ENCODE measurements at regions of chrX and their contacts with region 1.

Region 1: DNA sequence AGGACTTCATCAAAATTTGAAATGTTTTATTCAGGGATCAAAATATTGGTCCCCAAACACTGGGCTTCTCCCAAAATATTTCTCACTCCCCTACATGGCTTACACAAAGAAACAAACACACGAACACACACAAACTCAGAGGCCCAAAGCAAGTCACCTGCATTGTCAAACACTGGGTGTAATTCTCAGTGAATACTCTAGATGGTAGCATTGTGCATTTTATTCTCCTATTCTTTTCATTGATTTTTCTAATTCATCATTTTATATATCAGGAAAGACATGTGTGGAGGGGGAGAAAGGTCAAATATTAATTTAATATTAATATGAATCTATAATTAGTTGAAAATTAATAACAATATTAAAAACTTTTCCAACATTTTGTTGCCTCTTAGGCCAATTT is 72.3 kb upstream of the TNMD start:
- DNase-seq: peak; percentile 1
- ATAC-seq: peak; percentile 62; the same call in 1 of the 2 replicates
- H3K4me3 ChIP-seq: no peak overlapping the region
- H3K27ac ChIP-seq: no peak overlapping the region
- H3K4me1 ChIP-seq: no peaks in the 10 kb centered on the region
- H3K27me3 ChIP-seq: peaks cover 2% of the 10 kb centered on the region; the same call in 1 of the 2 replicates
- CTCF ChIP-seq: peak; percentile 67; the same call in 1 of the 2 replicates

Region 2: DNA sequence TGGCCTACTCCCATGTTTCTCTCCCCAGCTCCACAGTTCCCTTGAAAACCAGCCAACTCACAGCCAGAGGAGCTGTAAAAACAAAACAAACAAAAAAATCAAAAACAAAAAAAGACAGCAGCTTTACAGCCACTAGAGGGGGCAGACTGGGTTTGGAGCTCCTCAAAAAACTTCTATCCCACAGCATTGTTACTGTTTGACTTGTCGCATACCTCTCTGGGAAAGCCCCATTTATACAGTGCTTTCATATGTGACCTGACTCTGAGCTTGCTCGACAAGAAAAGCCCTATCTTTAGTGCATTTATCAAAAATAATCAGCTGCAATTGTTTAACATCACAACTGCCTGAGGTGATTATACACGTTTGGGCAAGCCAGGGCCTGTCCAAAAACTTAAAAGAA is 102.5 kb after region 1 on chrX:
- CTCF ChIA-PET with region 1: interaction called, 3 read pairs
- POLR2A ChIA-PET with region 1: no interaction called
- in situ Hi-C with region 1: no loop called
- intact Hi-C with region 1: loop called (anchors 5 kb)
- DNase-seq: no peak
- ATAC-seq: no peak
- H3K4me3 ChIP-seq: no peak overlapping the region
- H3K27ac ChIP-seq: no peak overlapping the region
- H3K4me1 ChIP-seq: no peaks in the 10 kb centered on the region
- H3K27me3 ChIP-seq: peaks cover 2% of the 10 kb centered on the region
- CTCF ChIP-seq: peak; percentile 67

Region 3: DNA sequence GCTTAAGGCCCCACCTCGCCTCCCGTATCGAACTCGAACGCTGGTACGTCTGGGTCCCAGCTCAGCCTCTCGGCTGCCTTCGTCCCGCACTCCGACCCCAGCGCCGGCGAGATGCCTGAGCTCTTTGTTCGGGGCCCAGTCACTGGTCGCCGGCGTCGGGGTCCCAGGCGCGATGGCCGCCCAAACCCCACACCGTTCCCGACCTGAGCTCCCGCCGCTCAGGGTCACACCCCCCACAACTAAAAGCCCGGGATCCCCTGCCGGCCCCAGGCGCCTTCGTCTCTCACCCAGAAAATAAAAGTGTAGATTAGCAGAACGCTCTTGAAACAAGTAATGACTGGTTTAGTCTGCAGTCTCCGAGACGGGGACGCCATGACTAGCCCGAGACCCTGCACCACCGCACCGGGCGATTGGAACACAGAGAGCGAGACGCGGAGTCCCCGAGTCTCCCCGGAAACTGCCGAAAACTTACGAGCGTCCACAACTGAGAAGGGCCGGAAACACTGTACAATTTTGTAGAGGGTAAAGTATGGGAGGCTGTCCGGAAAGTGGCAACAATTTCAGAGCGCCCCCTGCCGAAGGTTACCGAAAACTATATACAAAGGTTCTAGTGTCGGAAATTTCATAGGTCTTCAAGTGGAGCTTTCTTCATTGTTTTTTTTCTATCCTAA is 124.0 kb after region 1 on chrX and contains the start of gene TSPAN6:
- CTCF ChIA-PET with region 1: interaction called, 4 read pairs
- POLR2A ChIA-PET with region 1: no interaction called
- in situ Hi-C with region 1: no loop called
- intact Hi-C with region 1: loop called (anchors 1 kb)
- DNase-seq: peak; percentile 73
- ATAC-seq: peak; percentile 100
- H3K4me3 ChIP-seq: peak within 1 kb of the TSS; percentile 64 to 77
- H3K27ac ChIP-seq: peak within 1 kb of the TSS; percentile 64
- H3K4me1 ChIP-seq: peaks cover 4% of the 10 kb centered on the region; the same call in 1 of the 2 replicates
- H3K27me3 ChIP-seq: no peaks in the 10 kb centered on the region
- CTCF ChIP-seq: peak; percentile 84
- total RNA-seq, gene TSPAN6: 7.2 TPM

Region 4: DNA sequence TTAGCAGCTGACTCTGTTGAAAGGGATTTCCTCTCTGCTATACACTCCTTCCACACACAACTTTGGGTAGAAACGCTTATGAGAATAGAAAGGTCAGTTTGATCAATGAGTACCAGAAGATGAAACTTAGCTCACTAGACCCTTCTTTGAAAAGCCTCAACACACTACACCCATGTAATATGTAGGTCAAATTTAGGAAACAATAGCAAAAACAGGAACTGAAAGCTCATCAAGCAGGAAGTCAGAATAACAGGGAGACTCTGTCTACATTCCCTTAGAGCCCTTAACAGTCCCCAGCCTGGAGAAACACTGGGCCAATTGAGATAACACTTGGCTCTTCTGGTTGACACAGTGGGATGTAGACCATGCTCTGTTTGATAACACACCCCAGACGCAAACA is 162.2 kb after region 1 on chrX:
- CTCF ChIA-PET with region 1: interaction called, 13 read pairs
- POLR2A ChIA-PET with region 1: no interaction called
- in situ Hi-C with region 1: no loop called
- intact Hi-C with region 1: no loop called
- DNase-seq: no peak
- ATAC-seq: no peak
- H3K4me3 ChIP-seq: no peak overlapping the region
- H3K27ac ChIP-seq: no peak overlapping the region
- H3K4me1 ChIP-seq: no peaks in the 10 kb centered on the region
- H3K27me3 ChIP-seq: no peaks in the 10 kb centered on the region
- CTCF ChIP-seq: no peak

Region 5: DNA sequence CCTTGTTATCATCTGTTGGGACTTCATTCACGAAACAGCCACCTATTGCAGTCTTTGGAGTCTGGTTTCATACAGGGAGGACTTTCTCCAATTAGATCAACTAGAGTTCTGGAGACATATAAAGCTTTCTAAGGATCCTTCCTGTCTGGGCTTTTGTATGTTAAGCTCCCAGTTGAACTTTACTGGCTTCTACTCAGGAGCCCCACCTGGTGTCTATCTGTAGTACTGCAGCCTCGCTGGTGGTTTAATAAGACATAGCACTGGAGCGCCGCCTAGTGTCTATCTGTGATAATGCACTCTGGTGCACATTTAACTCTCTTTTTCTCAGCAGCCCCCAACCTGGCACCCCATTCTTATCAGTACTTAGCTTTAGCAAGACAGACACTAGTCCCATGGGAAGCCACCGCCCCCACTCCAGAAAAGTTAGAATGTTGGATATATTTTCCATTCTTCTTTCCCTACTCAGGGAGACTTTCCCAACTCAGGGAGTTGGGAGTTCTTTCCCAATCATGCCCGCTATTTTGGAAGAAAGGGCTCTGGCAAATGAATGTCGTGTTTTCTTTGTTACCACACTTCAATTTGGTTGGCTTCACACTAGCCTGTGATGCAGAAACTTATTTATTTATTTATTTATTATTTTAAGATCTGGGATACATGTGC is 256.3 kb after region 1 on chrX:
- CTCF ChIA-PET with region 1: no interaction called
- POLR2A ChIA-PET with region 1: no interaction called
- in situ Hi-C with region 1: no loop called
- intact Hi-C with region 1: loop called (anchors 1 kb)
- DNase-seq: peak; percentile 69
- ATAC-seq: peak; percentile 60
- H3K4me3 ChIP-seq: no peak overlapping the region
- H3K27ac ChIP-seq: no peak overlapping the region
- H3K4me1 ChIP-seq: no peaks in the 10 kb centered on the region
- H3K27me3 ChIP-seq: no peaks in the 10 kb centered on the region
- CTCF ChIP-seq: peak; percentile 99

Region 6: GRCh38 chrX:100850317-100850716 is 337.8 kb after region 1 on chrX:
- CTCF ChIA-PET with region 1: interaction called, 15 read pairs
- POLR2A ChIA-PET with region 1: no interaction called
- in situ Hi-C with region 1: no loop called
- intact Hi-C with region 1: no loop called
- DNase-seq: no peak
- ATAC-seq: peak; percentile 51; the same call in 1 of the 2 replicates
- H3K4me3 ChIP-seq: no peak overlapping the region
- H3K27ac ChIP-seq: no peak overlapping the region
- H3K4me1 ChIP-seq: no peaks in the 10 kb centered on the region
- H3K27me3 ChIP-seq: no peaks in the 10 kb centered on the region
- CTCF ChIP-seq: no peak

Measured in Panc1 (cell line).